Right cardiac atrium (tissue), 5 donors: ENCODE measurements at regions of chr4 and their contacts with region 1.

Region 1: GRCh38 chr4:184168406-184169019 is 49.2 kb downstream of the ENPP6 start:
- DNase-seq: peak; percentile 77 to 92 (median 92)
- ATAC-seq: peak; percentile 98
- H3K4me3 ChIP-seq: no peak overlapping the region
- H3K27ac ChIP-seq: no peak overlapping the region
- H3K4me1 ChIP-seq: no peaks in the 10 kb centered on the region
- H3K27me3 ChIP-seq: no peaks in the 10 kb centered on the region

Region 2: GRCh38 chr4:183722731-183723560 is 445.6 kb before region 1 on chr4:
- intact Hi-C with region 1: loop called in 1 of 4 experiments (anchors 10 kb)
- DNase-seq: peak; percentile 72 to 85 (median 81)
- ATAC-seq: peak; percentile 76 to 81
- H3K4me3 ChIP-seq: peak overlapping the region; percentile 52
- H3K27ac ChIP-seq: no peak overlapping the region
- H3K4me1 ChIP-seq: no peaks in the 10 kb centered on the region
- H3K27me3 ChIP-seq: no peaks in the 10 kb centered on the region

Region 3: GRCh38 chr4:183840311-183840710 is 328.2 kb before region 1 on chr4:
- intact Hi-C with region 1: loop called (anchors 2 to 5 kb)
- DNase-seq: peak; percentile 84 to 92 (median 88)
- ATAC-seq: peak; percentile 76 to 84
- H3K4me3 ChIP-seq: no peak overlapping the region
- H3K27ac ChIP-seq: no peak overlapping the region
- H3K4me1 ChIP-seq: peaks cover 2% of the 10 kb centered on the region
- H3K27me3 ChIP-seq: no peaks in the 10 kb centered on the region

Region 4: GRCh38 chr4:183848805-183849204 is 319.7 kb before region 1 on chr4:
- intact Hi-C with region 1: loop called in 2 of 4 experiments (anchors 5 kb)
- DNase-seq: no peak
- ATAC-seq: peak; percentile 31 to 40
- H3K4me3 ChIP-seq: no peak overlapping the region
- H3K27ac ChIP-seq: no peak overlapping the region
- H3K4me1 ChIP-seq: peaks cover 8% of the 10 kb centered on the region
- H3K27me3 ChIP-seq: no peaks in the 10 kb centered on the region

Region 5: GRCh38 chr4:184053434-184053833 is 115.1 kb before region 1 on chr4:
- intact Hi-C with region 1: no loop called
- DNase-seq: no peak
- ATAC-seq: no peak
- H3K4me3 ChIP-seq: no peak overlapping the region
- H3K27ac ChIP-seq: no peak overlapping the region
- H3K4me1 ChIP-seq: no peaks in the 10 kb centered on the region
- H3K27me3 ChIP-seq: no peaks in the 10 kb centered on the region

Region 6: DNA sequence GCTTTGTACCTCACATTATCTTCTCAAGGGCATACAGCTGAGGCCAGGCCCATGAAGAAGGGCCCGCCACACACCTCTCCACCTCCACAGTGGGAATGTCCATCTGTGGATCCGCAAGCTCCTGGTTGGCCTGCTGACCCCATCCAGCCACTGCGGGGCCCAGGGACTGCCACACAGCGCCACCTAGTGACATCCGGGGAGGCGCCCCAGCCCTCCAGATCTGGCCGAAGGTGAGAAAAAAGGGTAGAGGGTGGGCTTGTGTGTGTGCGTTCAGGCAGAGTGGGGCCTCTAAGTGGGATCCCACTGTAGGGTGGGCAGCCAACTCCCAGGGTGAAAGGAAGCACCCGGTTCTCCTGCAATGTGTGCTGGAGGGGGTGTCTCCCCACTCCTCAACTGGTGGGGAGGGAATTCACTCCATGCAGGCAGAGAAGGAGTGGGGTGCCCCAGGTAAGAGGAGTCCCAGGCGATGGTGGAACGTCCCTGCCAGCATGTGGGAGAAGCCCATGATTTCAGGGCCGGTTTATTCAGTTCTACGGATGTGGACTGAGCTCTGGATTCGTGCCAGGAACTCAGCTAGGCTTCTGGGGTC is 68.1 kb before region 1 on chr4:
- intact Hi-C with region 1: loop called in 2 of 4 experiments (anchors 5 to 10 kb)
- DNase-seq: peak; percentile 39 to 87 (median 78)
- ATAC-seq: peak; percentile 66 to 80
- H3K4me3 ChIP-seq: no peak overlapping the region
- H3K27ac ChIP-seq: no peak overlapping the region
- H3K4me1 ChIP-seq: no peaks in the 10 kb centered on the region
- H3K27me3 ChIP-seq: no peaks in the 10 kb centered on the region

Region 7: DNA sequence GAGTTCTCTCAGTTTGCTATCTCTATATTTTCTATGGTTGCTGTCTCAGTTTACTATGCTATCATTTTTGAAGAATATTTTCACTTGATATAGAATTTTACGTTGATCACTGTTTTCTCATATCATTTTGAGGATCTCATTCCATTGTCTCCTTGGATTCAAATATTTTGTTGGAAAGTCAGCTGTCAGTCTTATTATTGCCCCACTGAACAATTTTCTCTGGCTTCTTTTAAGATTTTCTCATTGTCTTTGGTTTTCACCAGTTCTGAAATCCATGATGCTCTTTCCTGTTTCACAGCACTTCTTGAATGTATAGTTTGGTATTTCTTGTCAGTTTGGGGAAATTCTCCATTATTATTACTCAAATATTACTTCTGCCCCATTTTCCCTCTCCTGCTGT is 32.0 kb before region 1 on chr4:
- intact Hi-C with region 1: no loop called
- DNase-seq: no peak
- ATAC-seq: no peak
- H3K4me3 ChIP-seq: no peak overlapping the region
- H3K27ac ChIP-seq: no peak overlapping the region
- H3K4me1 ChIP-seq: no peaks in the 10 kb centered on the region
- H3K27me3 ChIP-seq: no peaks in the 10 kb centered on the region